OCI-LY7 (cell line): ENCODE measurements at regions of chr19 and their contacts with region 1.

Region 1: DNA sequence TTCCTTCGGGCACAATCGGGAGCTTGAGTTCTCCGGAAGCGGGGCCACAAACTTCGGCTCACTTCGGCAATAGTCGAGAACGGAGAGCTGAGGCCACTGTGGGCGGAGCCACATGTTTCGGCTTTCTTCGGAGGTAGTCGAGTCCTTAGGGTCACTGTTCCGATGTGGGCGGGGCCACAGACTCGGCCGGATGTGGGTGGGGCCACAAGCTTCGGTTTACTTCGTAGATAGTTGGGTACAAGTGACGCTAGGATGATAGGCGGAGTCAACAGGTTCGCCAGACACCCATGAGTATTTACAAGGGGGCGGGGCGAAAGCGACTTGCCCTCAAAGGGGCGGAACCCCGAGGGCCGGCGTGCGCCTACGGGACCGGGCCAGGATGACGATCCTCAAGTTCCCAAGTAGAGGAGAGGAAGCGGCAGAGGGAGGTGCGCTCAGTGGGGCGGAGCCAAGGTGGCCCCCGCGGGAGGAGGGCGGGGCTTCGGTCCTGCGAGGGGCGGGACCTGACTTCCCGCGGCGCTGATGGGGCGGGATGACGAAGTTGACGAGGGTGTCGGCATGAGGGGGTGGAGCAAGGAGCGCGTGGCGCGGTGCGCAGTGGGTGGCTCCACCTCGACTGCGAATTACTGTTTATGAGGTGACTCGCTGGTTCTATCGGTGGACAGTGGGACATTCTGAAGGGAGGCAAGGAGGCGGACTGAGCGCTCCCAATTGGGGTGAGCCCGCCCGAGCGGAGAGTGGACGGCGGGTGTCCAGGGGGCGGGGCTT is 539 bp upstream of the MBOAT7 start:
- DNase-seq: peak; percentile 100
- H3K4me3 ChIP-seq: peak overlapping the region; percentile 76
- H3K27ac ChIP-seq: peak overlapping the region; percentile 82
- H3K4me1 ChIP-seq: peaks cover 25% of the 10 kb centered on the region
- CTCF ChIP-seq: no peak

Region 2: DNA sequence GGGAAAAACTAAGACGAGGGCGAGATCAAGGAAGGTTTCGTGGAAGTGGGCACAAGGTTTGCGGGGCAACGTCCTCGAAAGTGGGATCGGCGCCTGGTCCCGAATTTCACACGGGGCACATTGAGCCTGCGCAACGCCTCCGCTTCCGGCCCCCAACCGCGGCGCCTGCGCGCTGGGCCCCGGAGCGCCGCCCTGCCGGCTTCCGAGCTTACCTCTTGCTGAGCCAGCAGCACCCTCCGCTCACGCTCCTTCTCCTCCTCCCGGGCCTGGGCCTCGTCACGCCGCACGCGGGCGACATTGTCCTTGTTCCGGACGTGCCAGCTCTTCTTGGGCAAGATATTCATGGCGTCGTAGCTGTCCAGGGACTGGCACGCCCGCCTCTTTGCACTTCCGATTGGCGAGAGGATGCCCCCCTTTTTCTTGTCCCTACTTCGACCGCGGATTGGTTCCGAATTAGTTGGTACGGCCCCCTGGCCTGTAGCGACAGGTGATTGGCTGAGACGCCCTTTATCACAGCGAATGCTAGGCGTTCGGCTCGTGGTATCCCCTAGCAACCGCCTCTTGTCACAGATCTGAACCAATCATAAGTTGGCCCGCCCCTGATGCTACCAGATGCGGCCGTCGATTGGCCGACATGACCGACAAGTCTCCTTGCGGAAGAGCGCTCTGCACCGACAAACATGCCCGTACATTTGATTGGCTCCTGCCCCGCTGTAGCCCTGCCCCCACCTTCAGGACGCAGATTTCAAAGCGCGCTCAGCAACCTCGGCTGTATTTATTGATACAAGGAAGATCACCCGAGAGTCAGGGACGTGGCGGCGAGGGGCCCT is 30.4 kb before region 1 on chr19 and contains the start of gene LENG1:
- CTCF ChIA-PET with region 1: no interaction called
- POLR2A ChIA-PET with region 1: interaction called, 10 read pairs
- intact Hi-C with region 1: loop called (anchors 2 kb)
- DNase-seq: peak; percentile 100
- H3K4me3 ChIP-seq: peak within 1 kb of the TSS; percentile 81
- H3K27ac ChIP-seq: peak within 1 kb of the TSS; percentile 82
- H3K4me1 ChIP-seq: peaks cover 26% of the 10 kb centered on the region
- CTCF ChIP-seq: peak; percentile 64
- total RNA-seq, gene LENG1: 8.0 TPM in 2 replicates

Region 3: DNA sequence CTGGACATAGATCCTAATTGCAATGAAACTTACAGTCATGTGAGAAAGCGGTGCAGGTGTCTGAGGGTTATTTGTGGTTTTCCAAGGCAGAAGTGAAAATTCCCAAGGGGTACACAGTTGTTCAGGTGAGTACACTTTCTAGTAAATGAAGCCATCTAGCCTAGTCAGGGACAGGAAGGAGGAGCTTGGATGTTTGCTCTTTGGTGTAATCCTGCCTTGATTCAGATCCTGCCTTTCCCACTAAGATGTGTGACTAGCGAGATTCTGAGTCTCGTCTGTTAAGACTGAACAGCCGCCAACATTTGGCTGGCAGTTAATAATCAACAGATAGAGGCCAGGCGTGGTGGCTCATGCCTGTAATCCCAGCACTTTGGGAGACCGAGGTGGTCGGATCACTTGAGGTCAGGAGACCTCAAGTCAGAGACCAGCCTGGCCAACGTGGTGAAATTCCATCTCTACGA is 13.3 kb after region 1 on chr19:
- CTCF ChIA-PET with region 1: no interaction called
- POLR2A ChIA-PET with region 1: interaction called, 8 read pairs
- intact Hi-C with region 1: loop called (anchors 1 kb)
- DNase-seq: peak; percentile 47
- H3K4me3 ChIP-seq: peak overlapping the region; percentile 84
- H3K27ac ChIP-seq: peak overlapping the region; percentile 80
- H3K4me1 ChIP-seq: peaks cover 77% of the 10 kb centered on the region
- CTCF ChIP-seq: no peak